ENCODE measurements at regions of chr22 and their contacts with region 1.

Region 1: DNA sequence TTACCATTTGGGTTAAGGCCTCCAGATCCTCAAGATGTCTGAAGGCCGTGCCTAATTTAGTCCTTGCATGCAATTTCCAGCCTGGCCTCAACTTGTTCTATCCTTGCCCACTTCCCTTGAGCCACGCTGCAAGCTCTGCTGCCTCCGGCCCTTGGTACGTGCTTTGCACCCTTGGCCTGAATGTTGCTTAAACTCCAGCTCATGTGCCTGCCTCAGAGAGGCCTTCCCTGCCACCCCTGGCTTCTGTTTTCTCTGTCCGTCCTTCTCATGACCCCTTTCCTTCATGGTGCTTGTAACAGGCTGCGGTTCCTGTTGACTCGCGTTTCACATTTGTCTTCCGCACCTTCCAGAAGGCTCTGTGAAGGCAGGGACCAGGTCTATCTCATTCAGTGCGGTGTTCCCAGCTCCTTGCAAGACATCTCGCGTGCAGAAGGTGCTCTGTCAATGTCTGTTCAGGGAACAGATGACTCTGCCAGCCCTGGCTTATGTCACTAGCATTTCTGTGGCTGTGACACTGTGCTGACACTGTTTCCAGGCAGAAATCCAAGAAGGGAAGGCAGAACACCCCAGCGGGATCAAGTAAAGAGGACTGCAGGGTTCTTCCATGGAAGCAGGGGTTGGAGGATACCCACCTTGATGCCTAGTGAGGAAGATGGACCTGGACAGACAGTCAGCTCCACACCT is 61.8 kb downstream of the FBLN1 start:
- DNase-seq: no peak
- H3K4me3 ChIP-seq: no peak overlapping the region
- H3K27ac ChIP-seq: no peak overlapping the region
- H3K4me1 ChIP-seq: no peaks in the 10 kb centered on the region
- CTCF ChIP-seq: no peak

Region 2: DNA sequence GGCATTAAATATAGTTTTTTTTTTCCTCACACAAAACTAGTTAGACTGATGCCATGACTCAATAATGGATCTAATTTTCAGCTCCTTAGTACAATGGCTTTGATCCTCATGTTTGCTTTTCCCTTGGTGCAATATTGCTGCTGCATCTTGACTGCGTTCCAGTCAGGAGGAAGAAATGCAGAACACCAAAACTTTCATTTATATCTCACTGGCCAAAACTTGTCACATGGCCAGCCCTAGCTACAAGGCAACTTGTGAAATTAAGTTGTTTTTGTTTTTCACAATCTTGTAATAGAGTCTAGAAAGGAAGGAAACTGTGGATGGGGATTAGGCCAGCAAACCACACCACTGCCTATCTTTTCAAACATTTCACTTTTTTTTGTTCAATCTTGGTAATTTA is 187.8 kb before region 1 on chr22:
- CTCF ChIA-PET with region 1: no interaction called
- POLR2A ChIA-PET with region 1: no interaction called
- intact Hi-C with region 1: no loop called
- DNase-seq: no peak
- H3K4me3 ChIP-seq: no peak overlapping the region
- H3K27ac ChIP-seq: no peak overlapping the region
- H3K4me1 ChIP-seq: no peaks in the 10 kb centered on the region
- CTCF ChIP-seq: no peak

Region 3: GRCh38 chr22:45493286-45493771 is 71.2 kb before region 1 on chr22:
- CTCF ChIA-PET with region 1: no interaction called
- POLR2A ChIA-PET with region 1: no interaction called
- intact Hi-C with region 1: loop called (anchors 10 kb)
- DNase-seq: no peak
- H3K4me3 ChIP-seq: no peak overlapping the region
- H3K27ac ChIP-seq: no peak overlapping the region
- H3K4me1 ChIP-seq: no peaks in the 10 kb centered on the region
- CTCF ChIP-seq: no peak

Region 4: DNA sequence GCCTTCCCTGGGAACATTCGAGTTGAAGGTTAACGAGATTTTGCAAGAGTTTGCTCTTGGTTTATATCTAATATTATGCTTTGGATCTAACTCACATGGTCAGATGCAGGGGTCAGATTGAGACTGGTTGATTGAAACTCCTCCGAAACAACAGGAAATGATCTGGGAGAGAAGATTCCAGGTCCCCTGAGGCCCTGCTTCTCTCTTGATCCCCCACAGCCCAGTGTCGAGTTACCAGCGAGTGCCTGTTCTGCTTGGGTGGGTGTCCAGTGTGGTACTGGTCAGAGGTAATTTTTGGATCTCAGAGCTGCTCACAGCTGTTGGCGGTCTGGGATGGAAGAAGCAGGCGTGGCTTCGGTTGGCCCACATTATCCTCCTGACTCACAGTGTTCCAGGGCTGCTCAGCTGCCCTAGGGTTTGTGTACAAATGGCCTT is 52.6 kb before region 1 on chr22:
- CTCF ChIA-PET with region 1: no interaction called
- POLR2A ChIA-PET with region 1: no interaction called
- intact Hi-C with region 1: no loop called
- DNase-seq: no peak
- H3K4me3 ChIP-seq: no peak overlapping the region
- H3K27ac ChIP-seq: no peak overlapping the region
- H3K4me1 ChIP-seq: no peaks in the 10 kb centered on the region
- CTCF ChIP-seq: no peak

Region 5: DNA sequence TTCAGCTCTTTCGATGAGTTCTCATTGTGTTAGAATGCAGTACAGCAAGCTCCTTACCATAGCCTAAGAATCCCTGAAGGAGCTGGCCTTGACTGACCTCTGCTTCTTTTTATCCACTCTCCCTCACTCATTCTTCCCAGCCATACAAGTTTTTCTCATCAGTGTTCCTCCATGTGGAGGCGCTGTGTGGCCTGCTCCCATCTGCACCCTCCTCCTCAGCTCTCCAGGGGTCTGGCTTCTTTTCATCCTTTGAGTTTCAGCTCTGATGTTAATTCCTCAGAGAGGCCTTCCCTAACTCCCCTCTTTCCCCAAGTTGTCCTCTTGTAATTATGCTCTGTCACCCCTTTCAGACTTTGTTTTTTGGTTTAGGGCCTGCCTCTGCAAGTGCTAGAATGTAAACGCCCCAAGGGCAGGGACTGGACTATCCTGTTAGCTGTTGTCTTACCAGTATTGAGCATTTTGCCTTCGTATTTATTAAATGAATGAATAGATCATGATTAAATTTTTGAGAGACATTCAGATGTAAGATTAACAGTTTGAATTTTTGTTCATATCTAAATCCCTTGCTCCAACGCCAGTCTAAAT is 267.8 kb after region 1 on chr22:
- CTCF ChIA-PET with region 1: no interaction called
- POLR2A ChIA-PET with region 1: no interaction called
- intact Hi-C with region 1: no loop called
- DNase-seq: no peak
- H3K4me3 ChIP-seq: no peak overlapping the region
- H3K27ac ChIP-seq: no peak overlapping the region
- H3K4me1 ChIP-seq: no peaks in the 10 kb centered on the region
- CTCF ChIP-seq: no peak

Region 6: DNA sequence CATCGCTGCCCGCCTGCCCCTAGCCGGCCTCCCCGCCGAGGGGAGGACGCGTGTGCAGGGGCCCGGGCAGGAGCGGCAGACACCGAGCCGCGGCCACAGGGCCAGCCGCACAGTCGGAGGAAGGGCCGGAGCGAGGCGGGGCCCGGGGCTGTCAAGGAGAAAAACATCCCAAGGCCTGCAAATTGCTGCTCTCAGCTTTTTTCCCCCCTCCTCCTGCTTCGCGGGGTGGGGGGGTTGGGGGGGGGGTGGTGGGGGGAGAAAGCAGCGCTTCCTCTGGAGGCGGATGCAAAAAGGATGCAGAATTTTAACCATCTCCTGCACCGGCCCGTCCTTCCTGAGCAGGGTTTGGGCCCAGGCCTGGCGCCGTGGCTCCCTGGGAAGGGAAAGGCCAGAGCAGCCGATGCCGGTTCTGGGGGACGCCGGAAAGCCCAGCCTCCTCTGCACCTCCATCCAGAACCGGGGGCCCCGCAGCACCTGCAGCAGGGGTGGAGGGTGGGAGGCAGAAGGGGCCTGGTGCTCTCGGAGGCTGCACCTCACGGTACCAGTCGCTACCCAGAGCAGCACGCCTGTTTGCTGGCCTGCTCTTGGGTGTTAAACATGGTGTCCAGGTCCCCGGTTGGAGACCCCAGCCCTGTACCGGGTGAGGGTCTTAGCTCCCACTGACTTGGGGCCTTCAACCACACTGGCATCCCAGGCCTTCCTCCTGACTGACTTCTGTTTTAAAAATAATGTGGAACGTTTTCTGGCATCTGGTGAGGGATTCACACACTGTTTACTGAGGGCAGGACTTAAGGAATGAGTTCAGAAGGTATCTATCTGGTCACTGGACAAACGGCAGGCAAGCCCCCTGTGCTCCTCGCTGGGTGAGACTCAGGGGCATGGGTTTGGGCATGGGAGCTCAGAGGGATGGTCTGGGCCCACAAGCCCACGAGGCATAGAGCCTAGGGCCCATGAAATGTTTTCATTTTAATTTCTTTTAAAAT is 489.9 kb after region 1 on chr22:
- CTCF ChIA-PET with region 1: no interaction called
- POLR2A ChIA-PET with region 1: no interaction called
- intact Hi-C with region 1: no loop called
- DNase-seq: peak; percentile 80
- H3K4me3 ChIP-seq: peak overlapping the region; percentile 67
- H3K27ac ChIP-seq: peak overlapping the region; percentile 92
- H3K4me1 ChIP-seq: peaks cover 67% of the 10 kb centered on the region
- CTCF ChIP-seq: no peak

Measured in OCI-LY7 (cell line).